ENCODE measurements at regions of chr2 and their contacts with region 1.

Region 1: DNA sequence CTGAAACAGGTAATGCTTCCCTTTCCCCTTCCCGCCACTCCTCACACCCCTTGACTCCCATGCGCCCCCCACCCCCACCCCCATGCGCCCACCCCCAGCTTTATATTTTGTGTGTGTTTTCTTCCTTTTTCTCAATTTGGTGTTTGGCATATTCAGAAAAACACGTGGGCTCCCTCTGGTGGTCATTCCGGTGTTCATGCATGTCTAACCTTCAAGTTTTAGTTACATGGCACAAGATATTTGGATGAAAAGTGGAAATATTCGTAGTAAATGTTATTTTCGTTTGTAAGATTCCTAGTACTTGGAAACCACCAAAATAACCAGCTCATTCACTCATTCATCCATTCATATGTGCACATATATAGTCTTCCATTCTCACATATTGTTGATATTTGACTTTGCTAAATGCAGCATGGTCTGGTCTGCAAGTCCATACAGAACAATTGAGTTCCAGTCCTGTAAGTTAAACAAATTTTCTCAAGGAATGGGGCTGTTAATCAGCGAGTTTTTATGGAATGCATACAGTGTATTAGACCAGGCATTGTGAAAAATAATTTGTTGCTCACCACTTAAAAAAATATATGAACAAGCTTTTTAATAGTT is 143.6 kb upstream of the MAP3K20 start:
- DNase-seq: peak; percentile 69 to 75
- H3K4me3 ChIP-seq: no peak overlapping the region
- H3K27ac ChIP-seq: peak overlapping the region in 2 of 3 donors; percentile 2 to 62
- H3K4me1 ChIP-seq: peaks cover 13 to 18% of the 10 kb centered on the region in 2 donors
- H3K27me3 ChIP-seq: no peaks in the 10 kb centered on the region
- CTCF ChIP-seq: peak in 5 of 6 experiments; percentile 53 to 74 (median 64)
- POLR2A ChIP-seq: no peak

Region 2: DNA sequence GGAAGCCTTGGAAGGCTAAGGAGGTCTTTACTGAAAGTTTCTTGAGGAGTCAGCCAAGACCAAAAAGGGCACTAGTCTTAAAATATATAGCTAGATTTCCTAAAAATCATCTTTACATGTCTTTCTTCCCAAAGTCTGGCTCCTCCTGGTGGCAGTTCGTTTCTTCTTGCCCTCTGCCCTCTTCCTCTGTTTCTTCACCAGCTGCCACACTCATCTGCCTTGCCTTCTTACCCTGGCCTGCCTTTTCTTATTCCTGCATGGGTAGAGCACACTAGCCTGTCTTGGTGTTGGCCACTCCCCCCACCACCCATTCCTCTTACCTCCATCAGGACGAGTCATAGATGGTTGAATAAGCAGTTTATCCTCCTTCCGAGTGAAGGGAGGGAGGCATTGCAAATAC is 66.6 kb before region 1 on chr2:
- intact Hi-C with region 1: loop called (anchors 5 kb)
- DNase-seq: no peak
- H3K4me3 ChIP-seq: no peak overlapping the region
- H3K27ac ChIP-seq: no peak overlapping the region
- H3K4me1 ChIP-seq: peaks cover 0 to 6% of the 10 kb centered on the region in 2 donors
- H3K27me3 ChIP-seq: no peaks in the 10 kb centered on the region
- CTCF ChIP-seq: no peak
- POLR2A ChIP-seq: no peak

Measured in thyroid gland (tissue), 4 donors.